ENCODE measurements at regions of chrX and their contacts with region 1.

Region 1: DNA sequence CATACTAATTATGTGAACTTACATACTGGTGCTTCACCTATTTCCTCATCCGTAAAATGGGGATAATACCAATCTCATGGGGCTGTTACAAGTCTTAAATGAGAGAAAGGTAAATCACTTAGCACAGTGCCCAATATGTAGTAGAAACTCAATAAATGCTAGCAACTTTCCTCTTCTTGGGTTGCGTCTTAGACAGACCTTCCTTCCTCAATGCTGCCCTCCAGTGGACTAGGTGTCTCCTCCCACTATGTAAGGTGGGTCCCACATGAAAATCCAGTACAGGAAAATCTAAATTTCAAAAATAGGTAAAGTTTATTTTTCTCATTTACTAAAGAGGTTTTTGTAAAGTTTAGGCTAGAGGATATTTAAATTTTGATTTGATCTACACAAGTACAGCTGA is 20.6 kb downstream of the ZDHHC9 start:
- DNase-seq: no peak
- ATAC-seq: peak; percentile 97
- H3K4me3 ChIP-seq: no peak overlapping the region
- H3K27ac ChIP-seq: no peak overlapping the region
- H3K4me1 ChIP-seq: no peaks in the 10 kb centered on the region
- H3K27me3 ChIP-seq: no peaks in the 10 kb centered on the region
- CTCF ChIP-seq: peak; percentile 66 to 77 (median 69)
- EP300 ChIP-seq: no peak
- POLR2A ChIP-seq: no peak
- RAD21 ChIP-seq: peak; percentile 78

Region 2: GRCh38 chrX:129637217-129638109 is 185.7 kb before region 1 on chrX:
- CTCF ChIA-PET with region 1: interaction called, 24 read pairs
- POLR2A ChIA-PET with region 1: no interaction called
- RAD21 ChIA-PET with region 1: interaction called, 6 read pairs
- SMC1A ChIA-PET with region 1: interaction called, 13 read pairs
- in situ Hi-C with region 1: no loop called
- intact Hi-C with region 1: loop called (anchors 1 kb)
- DNase-seq: peak; percentile 33
- ATAC-seq: peak; percentile 92
- H3K4me3 ChIP-seq: no peak overlapping the region
- H3K27ac ChIP-seq: no peak overlapping the region
- H3K4me1 ChIP-seq: no peaks in the 10 kb centered on the region
- H3K27me3 ChIP-seq: no peaks in the 10 kb centered on the region; a peak in 2 of 4 replicates
- CTCF ChIP-seq: peak; percentile 93 to 98 (median 97)
- EP300 ChIP-seq: no peak
- POLR2A ChIP-seq: no peak
- RAD21 ChIP-seq: peak; percentile 79

Region 3: DNA sequence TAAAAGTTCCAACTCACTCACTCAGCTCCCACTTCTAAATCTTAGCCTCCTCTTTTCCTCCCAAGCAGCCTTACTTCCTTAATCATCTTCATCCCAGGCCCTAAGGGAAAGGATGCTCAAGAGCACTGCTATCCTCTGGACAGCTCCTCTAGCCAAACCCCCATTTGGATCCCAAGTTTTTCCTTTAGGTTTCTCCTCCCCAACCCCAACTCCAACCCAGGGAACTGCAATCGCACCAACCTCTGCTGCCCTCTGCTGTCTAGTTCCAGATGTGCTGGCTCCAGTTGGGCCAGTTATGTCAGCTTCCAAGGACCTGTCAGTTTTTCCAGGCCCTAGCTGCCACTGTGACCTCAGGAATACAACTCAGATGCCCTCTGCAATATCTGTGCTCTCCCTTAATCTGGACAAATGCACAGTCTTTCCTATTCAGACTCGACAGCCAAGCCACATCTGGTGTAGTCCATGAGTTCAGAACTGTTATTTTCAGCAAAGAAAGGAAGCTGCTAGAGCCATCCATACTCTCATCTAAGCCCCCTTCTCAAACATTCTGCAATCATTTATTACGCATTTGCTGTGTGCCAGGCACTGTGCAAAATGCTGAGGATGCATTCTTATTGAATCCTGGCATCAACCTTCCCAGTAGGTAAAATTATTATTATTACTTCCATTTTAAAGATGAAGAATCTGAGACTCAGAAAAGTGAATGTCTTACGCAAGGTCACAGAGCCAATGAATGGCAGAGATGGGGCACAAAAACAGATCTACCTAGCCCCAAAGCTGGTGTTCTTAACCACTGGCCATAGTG is 96.6 kb before region 1 on chrX:
- CTCF ChIA-PET with region 1: interaction called, 15 read pairs
- POLR2A ChIA-PET with region 1: no interaction called
- RAD21 ChIA-PET with region 1: interaction called, 3 read pairs
- SMC1A ChIA-PET with region 1: interaction called, 6 read pairs
- in situ Hi-C with region 1: no loop called
- intact Hi-C with region 1: loop called (anchors 5 kb)
- DNase-seq: no peak
- ATAC-seq: peak; percentile 83
- H3K4me3 ChIP-seq: no peak overlapping the region
- H3K27ac ChIP-seq: no peak overlapping the region
- H3K4me1 ChIP-seq: no peaks in the 10 kb centered on the region
- H3K27me3 ChIP-seq: no peaks in the 10 kb centered on the region
- CTCF ChIP-seq: peak; percentile 54 to 74 (median 67)
- EP300 ChIP-seq: no peak
- POLR2A ChIP-seq: no peak
- RAD21 ChIP-seq: peak; percentile 68

Region 4: DNA sequence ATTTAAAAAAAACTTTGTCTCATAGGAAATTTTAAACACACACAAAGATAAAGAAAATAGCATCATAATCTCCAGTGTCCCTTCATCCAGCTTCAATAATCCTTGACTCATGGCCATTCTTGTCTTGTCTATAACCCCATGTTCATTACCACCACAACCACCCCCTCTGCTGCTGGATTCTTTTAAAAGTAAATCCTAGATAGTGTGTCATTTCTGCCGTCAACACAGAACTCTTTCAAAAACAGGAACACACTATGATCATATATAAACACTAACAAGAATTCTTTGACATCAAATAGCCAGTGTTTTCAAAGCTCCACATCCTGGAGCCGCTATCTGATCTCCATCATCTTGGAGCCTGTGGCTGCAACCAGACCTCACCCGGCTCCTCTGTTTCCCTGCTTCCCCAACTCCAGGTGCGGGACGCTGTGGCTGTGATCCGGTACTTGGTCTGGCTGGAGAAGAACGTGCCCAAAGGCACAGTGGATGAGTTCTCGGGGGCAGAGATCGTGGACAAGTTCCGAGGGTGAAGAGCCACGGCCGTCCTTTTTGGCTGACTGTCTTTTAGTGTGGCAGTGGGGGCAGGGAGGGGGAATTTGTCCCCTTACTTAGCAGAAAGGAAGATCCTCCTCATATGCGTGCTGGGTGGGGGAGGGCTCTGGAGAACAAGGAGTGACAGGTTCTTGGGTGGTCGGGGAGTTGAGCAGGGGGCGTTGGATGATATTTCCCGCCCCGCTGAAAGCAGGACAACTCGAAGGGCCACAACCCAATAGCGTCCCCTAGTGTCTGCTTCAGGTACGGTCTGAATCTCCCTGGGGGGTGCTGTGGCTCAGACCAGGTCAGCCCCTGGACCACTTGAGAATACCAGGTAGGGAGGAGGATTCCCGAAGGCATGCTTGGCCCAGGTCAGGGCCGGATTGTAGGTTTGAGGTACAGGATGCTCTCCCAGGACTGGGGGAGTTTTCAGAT is 68.8 kb before region 1 on chrX:
- CTCF ChIA-PET with region 1: interaction called, 80 read pairs
- POLR2A ChIA-PET with region 1: no interaction called
- RAD21 ChIA-PET with region 1: interaction called, 29 read pairs
- SMC1A ChIA-PET with region 1: interaction called, 27 read pairs
- in situ Hi-C with region 1: no loop called
- intact Hi-C with region 1: loop called (anchors 1 kb)
- DNase-seq: no peak
- ATAC-seq: no peak
- H3K4me3 ChIP-seq: no peak overlapping the region
- H3K27ac ChIP-seq: no peak overlapping the region
- H3K4me1 ChIP-seq: peaks cover 19% of the 10 kb centered on the region
- H3K27me3 ChIP-seq: no peaks in the 10 kb centered on the region
- CTCF ChIP-seq: peak; percentile 31 to 60 (median 56); a peak in 5 of 6 replicates
- EP300 ChIP-seq: no peak
- POLR2A ChIP-seq: no peak
- RAD21 ChIP-seq: peak; percentile 59

Region 5: DNA sequence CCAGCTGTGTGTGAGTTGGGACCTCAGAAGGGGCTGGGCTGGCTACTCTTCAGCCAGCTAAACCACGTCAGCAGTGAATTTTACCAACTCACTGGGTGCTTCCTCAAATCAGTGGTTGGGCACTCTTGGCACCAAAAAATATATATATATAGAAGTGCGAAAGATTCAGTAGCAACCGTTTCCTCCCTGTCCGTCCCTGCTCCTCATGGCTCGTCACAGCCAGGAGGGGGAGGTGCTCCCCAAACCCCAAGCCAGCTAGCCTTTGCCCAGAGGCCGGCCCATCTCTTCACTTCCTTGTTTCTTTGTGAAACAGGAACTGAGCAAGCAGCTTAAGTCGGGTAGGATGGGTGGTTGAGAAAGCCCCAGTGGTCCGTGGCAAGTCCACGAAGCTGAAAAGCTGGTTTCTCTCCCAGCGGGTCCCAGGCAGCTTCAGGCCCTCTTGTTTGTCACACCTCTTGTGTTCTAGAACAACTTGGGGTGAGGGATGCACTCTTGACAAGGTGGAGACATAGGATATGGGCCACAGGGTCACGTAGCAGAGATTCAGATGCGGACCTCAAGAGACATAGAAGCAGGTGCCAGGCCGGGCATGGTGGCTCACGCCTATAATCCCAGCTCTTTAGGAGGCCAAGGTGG is 50.2 kb before region 1 on chrX:
- CTCF ChIA-PET with region 1: interaction called, 20 read pairs
- POLR2A ChIA-PET with region 1: no interaction called
- RAD21 ChIA-PET with region 1: interaction called, 4 read pairs
- SMC1A ChIA-PET with region 1: interaction called, 21 read pairs
- in situ Hi-C with region 1: no loop called
- intact Hi-C with region 1: no loop called
- DNase-seq: peak; percentile 91
- ATAC-seq: peak; percentile 84
- H3K4me3 ChIP-seq: no peak overlapping the region
- H3K27ac ChIP-seq: peak overlapping the region; percentile 86
- H3K4me1 ChIP-seq: peaks cover 70% of the 10 kb centered on the region
- H3K27me3 ChIP-seq: no peaks in the 10 kb centered on the region
- CTCF ChIP-seq: peak in 1 of 3 experiments; percentile 34; a peak in 1 of 6 replicates
- EP300 ChIP-seq: peak; percentile 34 to 65; a peak in 3 of 4 replicates
- POLR2A ChIP-seq: peak; percentile 66
- RAD21 ChIP-seq: peak; percentile 20; the same call in 1 of the 2 replicates

Region 6: DNA sequence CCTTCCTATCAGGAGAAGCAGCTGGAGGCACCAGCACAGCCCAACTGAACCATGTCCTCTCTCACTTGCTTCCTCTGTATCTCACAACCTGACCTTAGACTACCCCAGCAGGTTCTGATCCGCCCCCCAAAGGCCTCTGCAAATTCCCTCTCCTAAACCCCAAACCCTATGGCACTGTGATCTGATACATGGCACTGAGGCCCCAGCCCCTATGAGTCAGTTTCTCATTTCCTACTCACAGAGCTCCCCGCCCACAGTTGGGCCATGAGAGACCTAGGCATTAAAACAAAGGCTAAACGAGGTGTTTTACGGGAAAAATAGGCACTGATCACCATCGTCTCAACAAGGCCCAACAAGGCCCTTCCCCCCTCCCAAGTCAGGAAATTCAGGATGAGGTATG is 24.2 kb before region 1 on chrX:
- CTCF ChIA-PET with region 1: interaction called, 10 read pairs
- POLR2A ChIA-PET with region 1: no interaction called
- RAD21 ChIA-PET with region 1: no interaction called
- SMC1A ChIA-PET with region 1: interaction called, 5 read pairs
- in situ Hi-C with region 1: no loop called
- intact Hi-C with region 1: no loop called
- DNase-seq: no peak
- ATAC-seq: peak; percentile 38; the same call in 2 of the 3 replicates
- H3K4me3 ChIP-seq: no peak overlapping the region
- H3K27ac ChIP-seq: no peak overlapping the region
- H3K4me1 ChIP-seq: no peaks in the 10 kb centered on the region
- H3K27me3 ChIP-seq: no peaks in the 10 kb centered on the region
- CTCF ChIP-seq: no peak
- EP300 ChIP-seq: no peak
- POLR2A ChIP-seq: no peak
- RAD21 ChIP-seq: no peak

Region 7: DNA sequence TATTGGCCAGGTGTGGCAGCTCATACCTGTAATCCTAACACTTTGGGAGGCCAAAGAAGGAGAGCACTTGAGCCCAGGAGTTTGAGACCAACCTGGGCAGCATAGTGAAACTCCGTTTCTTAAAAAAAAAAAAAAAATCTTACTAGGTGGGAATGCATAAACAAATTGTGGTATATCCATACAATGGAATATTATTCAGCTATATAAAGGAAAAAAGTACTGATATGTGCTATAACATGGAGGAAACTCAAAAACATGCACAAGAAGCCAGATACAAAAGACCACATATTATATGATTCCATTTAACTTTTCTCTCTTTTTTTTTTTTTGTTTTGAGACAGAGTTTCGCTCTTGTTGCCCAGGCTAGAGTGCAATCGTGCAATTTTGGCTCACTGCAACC is 145.9 kb after region 1 on chrX:
- CTCF ChIA-PET with region 1: no interaction called
- POLR2A ChIA-PET with region 1: no interaction called
- RAD21 ChIA-PET with region 1: no interaction called
- SMC1A ChIA-PET with region 1: no interaction called
- in situ Hi-C with region 1: no loop called
- intact Hi-C with region 1: no loop called
- DNase-seq: no peak
- ATAC-seq: no peak
- H3K4me3 ChIP-seq: no peak overlapping the region
- H3K27ac ChIP-seq: no peak overlapping the region
- H3K4me1 ChIP-seq: no peaks in the 10 kb centered on the region
- H3K27me3 ChIP-seq: no peaks in the 10 kb centered on the region
- CTCF ChIP-seq: no peak
- EP300 ChIP-seq: no peak
- POLR2A ChIP-seq: no peak
- RAD21 ChIP-seq: no peak

Region 8: GRCh38 chrX:130060122-130061069 is 237.3 kb after region 1 on chrX:
- CTCF ChIA-PET with region 1: no interaction called
- POLR2A ChIA-PET with region 1: no interaction called
- RAD21 ChIA-PET with region 1: no interaction called
- SMC1A ChIA-PET with region 1: interaction called, 4 read pairs
- in situ Hi-C with region 1: no loop called
- intact Hi-C with region 1: loop called (anchors 10 kb)
- DNase-seq: no peak
- ATAC-seq: peak; percentile 98
- H3K4me3 ChIP-seq: peak overlapping the region; percentile 36; the same call in 1 of the 2 replicates
- H3K27ac ChIP-seq: no peak overlapping the region
- H3K4me1 ChIP-seq: peaks cover 3% of the 10 kb centered on the region; the same call in 1 of the 2 replicates
- H3K27me3 ChIP-seq: no peaks in the 10 kb centered on the region
- CTCF ChIP-seq: peak; percentile 66 to 90 (median 76)
- EP300 ChIP-seq: no peak
- POLR2A ChIP-seq: peak; percentile 66
- RAD21 ChIP-seq: peak; percentile 79

Measured in GM12878 (cell line).